Activated CD8-positive, alpha-beta T cell treated with anti-CD3 and anti-CD28 coated beads, Interleukin-2, amount 10 ng/mL, durations not matched to agents 7 days and 5 days (primary cell): ENCODE measurements at regions of chr10 and their contacts with region 1.

Region 1: DNA sequence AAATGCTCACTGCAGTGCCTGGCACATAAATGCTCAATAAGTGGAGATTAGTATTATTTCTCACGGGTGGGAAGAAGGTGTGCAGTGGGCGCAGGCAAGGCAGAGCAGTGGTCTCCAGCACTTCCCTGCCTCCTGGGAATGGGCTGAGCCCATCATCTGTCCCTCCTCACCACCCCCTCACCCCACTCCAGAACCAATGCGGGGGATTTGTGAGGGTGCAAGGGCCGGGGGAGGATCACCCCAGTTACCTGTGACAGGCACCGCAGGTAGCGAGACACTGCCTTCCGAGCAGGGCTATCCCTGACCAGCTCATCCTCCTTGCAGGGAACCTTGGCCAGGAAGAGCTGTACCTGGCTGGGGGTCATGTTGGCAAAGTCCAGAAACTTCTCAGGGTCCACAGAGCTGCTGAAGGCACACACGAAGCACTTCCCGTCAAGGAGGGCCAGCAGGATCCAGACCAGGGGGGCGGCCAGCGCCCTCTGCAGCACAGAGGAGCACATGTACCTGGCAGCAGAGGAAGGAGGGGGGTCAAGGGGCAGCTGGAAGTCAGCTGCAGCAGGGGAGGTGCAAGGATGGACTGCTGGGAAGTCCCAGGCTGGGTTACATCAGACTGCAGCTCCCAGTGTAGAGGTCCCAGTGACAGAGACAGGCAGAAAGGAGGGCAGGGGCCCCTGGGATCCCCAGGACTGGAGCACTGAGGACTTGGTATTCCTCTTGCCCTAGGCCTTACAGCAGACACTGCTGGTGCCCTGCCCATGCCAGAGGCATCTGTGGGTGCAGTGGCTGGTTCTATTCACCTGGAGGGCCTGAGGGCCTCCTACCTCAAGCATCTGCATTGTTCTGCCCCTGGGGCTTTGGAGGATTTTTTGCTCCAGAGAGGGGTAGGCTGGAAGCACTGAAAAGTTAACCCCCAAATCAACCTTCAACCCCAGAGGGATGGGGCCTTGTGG is 2.7 kb downstream of the CALHM3 start:
- DNase-seq: peak; percentile 54
- ATAC-seq: peak; percentile 34
- H3K4me3 Mint-ChIP-seq: no peak overlapping the region
- H3K27ac Mint-ChIP-seq: peak overlapping the region; percentile 74
- H3K4me1 Mint-ChIP-seq: peaks cover 70% of the 10 kb centered on the region
- H3K27me3 Mint-ChIP-seq: no peaks in the 10 kb centered on the region

Region 2: DNA sequence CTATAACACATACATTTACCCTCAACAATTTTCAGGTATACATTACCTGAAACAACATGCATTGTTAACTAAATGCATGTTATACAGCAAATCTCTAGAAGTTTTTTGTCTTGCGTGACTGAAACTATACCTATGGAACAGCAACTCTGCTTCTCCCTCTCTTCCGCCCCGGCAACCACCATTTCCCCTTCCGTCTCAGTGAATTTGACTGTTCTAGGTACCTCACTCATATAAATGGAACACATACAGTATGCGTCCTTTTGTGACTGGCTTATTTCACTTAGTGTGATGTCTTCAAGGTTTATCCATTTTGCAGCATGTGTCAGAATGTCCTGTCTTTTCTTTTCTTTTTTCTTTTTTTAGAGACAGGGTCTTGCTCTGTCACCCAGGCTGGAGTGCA is 46.7 kb before region 1 on chr10:
- CTCF ChIA-PET with region 1: interaction called, 10 read pairs
- POLR2A ChIA-PET with region 1: no interaction called
- DNase-seq: peak; percentile 60
- ATAC-seq: peak; percentile 76
- H3K4me3 Mint-ChIP-seq: peak overlapping the region; percentile 42
- H3K27ac Mint-ChIP-seq: peak overlapping the region; percentile 81
- H3K4me1 Mint-ChIP-seq: peaks cover 63% of the 10 kb centered on the region
- H3K27me3 Mint-ChIP-seq: no peaks in the 10 kb centered on the region

Region 3: GRCh38 chr10:103451831-103452505 is 24.4 kb before region 1 on chr10 and contains the start of gene CALHM2:
- CTCF ChIA-PET with region 1: interaction called, 54 read pairs
- POLR2A ChIA-PET with region 1: interaction called, 43 read pairs
- DNase-seq: peak; percentile 74
- ATAC-seq: peak; percentile 78
- H3K4me3 Mint-ChIP-seq: peak within 1 kb of the TSS; percentile 98
- H3K27ac Mint-ChIP-seq: peak within 1 kb of the TSS; percentile 92
- H3K4me1 Mint-ChIP-seq: peaks cover 71% of the 10 kb centered on the region
- H3K27me3 Mint-ChIP-seq: no peaks in the 10 kb centered on the region
- total RNA-seq, gene CALHM2: 131 to 135 TPM

Region 4: GRCh38 chr10:103457176-103457712 is 19.1 kb before region 1 on chr10:
- CTCF ChIA-PET with region 1: interaction called, 54 read pairs
- POLR2A ChIA-PET with region 1: interaction called, 43 read pairs
- DNase-seq: no peak
- ATAC-seq: no peak
- H3K4me3 Mint-ChIP-seq: peak overlapping the region; percentile 38
- H3K27ac Mint-ChIP-seq: peak overlapping the region; percentile 72
- H3K4me1 Mint-ChIP-seq: peaks cover 65% of the 10 kb centered on the region
- H3K27me3 Mint-ChIP-seq: no peaks in the 10 kb centered on the region

Region 5: GRCh38 chr10:103504181-103504783 is 28.0 kb after region 1 on chr10:
- CTCF ChIA-PET with region 1: no interaction called
- POLR2A ChIA-PET with region 1: no interaction called
- DNase-seq: peak; percentile 56
- ATAC-seq: peak; percentile 85
- H3K4me3 Mint-ChIP-seq: no peak overlapping the region
- H3K27ac Mint-ChIP-seq: no peak overlapping the region
- H3K4me1 Mint-ChIP-seq: peaks cover 14% of the 10 kb centered on the region
- H3K27me3 Mint-ChIP-seq: peaks cover 52% of the 10 kb centered on the region